ENCODE measurements at regions of chr4 and their contacts with region 1.

Region 1: GRCh38 chr4:82798168-82799005 is at the start of gene SCD5:
- DNase-seq: peak; percentile 60
- ATAC-seq: peak; percentile 75
- H3K4me3 Mint-ChIP-seq: peak within 1 kb of the TSS; percentile 86
- H3K27ac Mint-ChIP-seq: no peak within 1 kb of the TSS
- H3K4me1 Mint-ChIP-seq: peaks cover 24% of the 10 kb centered on the region
- H3K27me3 Mint-ChIP-seq: peaks cover 94% of the 10 kb centered on the region
- CTCF ChIP-seq: no peak
- total RNA-seq, gene SCD5: 4.6 to 6.3 TPM (median 4.9 TPM) in 3 replicates

Region 2: GRCh38 chr4:82785611-82786400 is 12.6 kb before region 1 on chr4:
- CTCF ChIA-PET with region 1: interaction called, 10 read pairs
- POLR2A ChIA-PET with region 1: interaction called, 7 read pairs
- DNase-seq: no peak
- ATAC-seq: no peak
- H3K4me3 Mint-ChIP-seq: no peak overlapping the region
- H3K27ac Mint-ChIP-seq: no peak overlapping the region
- H3K4me1 Mint-ChIP-seq: peaks cover 46% of the 10 kb centered on the region
- H3K27me3 Mint-ChIP-seq: peaks cover 100% of the 10 kb centered on the region
- CTCF ChIP-seq: no peak